ENCODE measurements at regions of chr10 and their contacts with region 1.

Region 1: GRCh38 chr10:86960003-86960862 is 1.8 kb downstream of the SNCG start:
- DNase-seq: peak; percentile 85
- H3K4me3 ChIP-seq: no peak overlapping the region
- H3K27ac ChIP-seq: peak overlapping the region; percentile 78
- H3K4me1 ChIP-seq: peaks cover 45% of the 10 kb centered on the region
- H3K27me3 ChIP-seq: no peaks in the 10 kb centered on the region
- CTCF ChIP-seq: peak; percentile 100
- POLR2A ChIP-seq: no peak

Region 2: GRCh38 chr10:86580521-86580891 is 379.7 kb before region 1 on chr10:
- CTCF ChIA-PET with region 1: no interaction called
- POLR2A ChIA-PET with region 1: no interaction called
- dilution Hi-C with region 1: no loop called
- intact Hi-C with region 1: no loop called
- DNase-seq: no peak
- H3K4me3 ChIP-seq: no peak overlapping the region
- H3K27ac ChIP-seq: no peak overlapping the region
- H3K4me1 ChIP-seq: no peaks in the 10 kb centered on the region
- H3K27me3 ChIP-seq: peaks cover 2 to 3% of the 10 kb centered on the region in 2 experiments
- CTCF ChIP-seq: no peak
- POLR2A ChIP-seq: no peak

Region 3: DNA sequence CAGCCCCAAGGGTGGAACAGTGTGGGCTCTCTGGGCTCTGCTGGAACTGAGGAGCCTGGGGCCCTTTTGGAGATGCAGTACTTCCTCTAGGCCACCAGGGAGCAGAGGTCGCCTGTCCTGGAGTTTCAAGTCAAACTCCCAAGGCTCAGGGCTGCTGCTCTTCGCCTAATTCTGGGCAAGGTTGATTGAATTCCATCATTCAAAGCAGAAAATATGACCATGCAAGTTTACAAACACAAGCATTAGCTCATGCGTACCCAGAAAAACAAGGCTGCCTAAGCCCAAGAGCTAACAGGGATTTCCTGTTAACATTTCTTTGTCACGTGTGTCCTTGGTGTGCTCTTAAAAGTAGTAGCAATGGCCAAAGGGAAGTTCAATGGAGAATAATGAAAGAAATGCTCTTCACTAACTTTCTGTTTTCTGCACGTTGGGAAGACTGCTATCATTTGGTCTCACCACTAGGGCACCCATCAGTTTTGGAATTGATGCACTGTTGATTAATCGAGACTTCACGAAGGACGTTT is 271.8 kb before region 1 on chr10:
- CTCF ChIA-PET with region 1: interaction called, 16 read pairs
- POLR2A ChIA-PET with region 1: no interaction called
- dilution Hi-C with region 1: no loop called
- intact Hi-C with region 1: loop called (anchors 1 kb)
- DNase-seq: peak; percentile 52
- H3K4me3 ChIP-seq: no peak overlapping the region
- H3K27ac ChIP-seq: no peak overlapping the region
- H3K4me1 ChIP-seq: no peaks in the 10 kb centered on the region
- H3K27me3 ChIP-seq: peaks cover 30 to 43% of the 10 kb centered on the region in 2 experiments
- CTCF ChIP-seq: peak; percentile 74 to 76
- POLR2A ChIP-seq: no peak

Region 4: GRCh38 chr10:86747796-86748581 is 212.2 kb before region 1 on chr10:
- CTCF ChIA-PET with region 1: no interaction called
- POLR2A ChIA-PET with region 1: no interaction called
- dilution Hi-C with region 1: no loop called
- intact Hi-C with region 1: loop called (anchors 5 kb)
- DNase-seq: peak; percentile 92
- H3K4me3 ChIP-seq: no peak overlapping the region
- H3K27ac ChIP-seq: no peak overlapping the region
- H3K4me1 ChIP-seq: peaks cover 12% of the 10 kb centered on the region
- H3K27me3 ChIP-seq: peaks cover 47 to 67% of the 10 kb centered on the region in 2 experiments
- CTCF ChIP-seq: no peak
- POLR2A ChIP-seq: peak; percentile 46

Region 5: GRCh38 chr10:86878983-86879713 is 81.1 kb before region 1 on chr10:
- CTCF ChIA-PET with region 1: no interaction called
- POLR2A ChIA-PET with region 1: no interaction called
- dilution Hi-C with region 1: no loop called
- intact Hi-C with region 1: no loop called
- DNase-seq: no peak
- H3K4me3 ChIP-seq: no peak overlapping the region
- H3K27ac ChIP-seq: no peak overlapping the region
- H3K4me1 ChIP-seq: peaks cover 10% of the 10 kb centered on the region
- H3K27me3 ChIP-seq: peaks cover 32 to 45% of the 10 kb centered on the region in 2 experiments
- CTCF ChIP-seq: no peak
- POLR2A ChIP-seq: no peak

Region 6: GRCh38 chr10:86936661-86937501 is 23.4 kb before region 1 on chr10:
- CTCF ChIA-PET with region 1: interaction called, 325 read pairs
- POLR2A ChIA-PET with region 1: no interaction called
- dilution Hi-C with region 1: no loop called
- intact Hi-C with region 1: loop called (anchors 1 kb)
- DNase-seq: no peak
- H3K4me3 ChIP-seq: no peak overlapping the region
- H3K27ac ChIP-seq: no peak overlapping the region
- H3K4me1 ChIP-seq: no peaks in the 10 kb centered on the region
- H3K27me3 ChIP-seq: no peaks in the 10 kb centered on the region
- CTCF ChIP-seq: no peak
- POLR2A ChIP-seq: no peak

Region 7: GRCh38 chr10:86971232-86971991 is 11.2 kb after region 1 on chr10:
- CTCF ChIA-PET with region 1: interaction called, 110 read pairs
- POLR2A ChIA-PET with region 1: interaction called, 11 read pairs
- dilution Hi-C with region 1: no loop called
- intact Hi-C with region 1: loop called (anchors 2 kb)
- DNase-seq: peak; percentile 73
- H3K4me3 ChIP-seq: peak overlapping the region in 2 of 3 experiments; percentile 47 to 48
- H3K27ac ChIP-seq: peak overlapping the region; percentile 77
- H3K4me1 ChIP-seq: peaks cover 48% of the 10 kb centered on the region
- H3K27me3 ChIP-seq: no peaks in the 10 kb centered on the region
- CTCF ChIP-seq: no peak
- POLR2A ChIP-seq: no peak

Region 8: GRCh38 chr10:88880282-88881076 is 1920.2 kb after region 1 on chr10:
- CTCF ChIA-PET with region 1: no interaction called
- POLR2A ChIA-PET with region 1: no interaction called
- dilution Hi-C with region 1: no loop called
- intact Hi-C with region 1: loop called (anchors 10 kb)
- DNase-seq: peak; percentile 82
- H3K4me3 ChIP-seq: peak overlapping the region; percentile 30 to 55 (median 55)
- H3K27ac ChIP-seq: peak overlapping the region; percentile 84
- H3K4me1 ChIP-seq: peaks cover 30% of the 10 kb centered on the region
- H3K27me3 ChIP-seq: no peaks in the 10 kb centered on the region
- CTCF ChIP-seq: peak; percentile 5 to 28
- POLR2A ChIP-seq: peak; percentile 83